Aorta (tissue), 5 donors: ENCODE measurements at regions of chr15 and their contacts with region 1.

Region 1: DNA sequence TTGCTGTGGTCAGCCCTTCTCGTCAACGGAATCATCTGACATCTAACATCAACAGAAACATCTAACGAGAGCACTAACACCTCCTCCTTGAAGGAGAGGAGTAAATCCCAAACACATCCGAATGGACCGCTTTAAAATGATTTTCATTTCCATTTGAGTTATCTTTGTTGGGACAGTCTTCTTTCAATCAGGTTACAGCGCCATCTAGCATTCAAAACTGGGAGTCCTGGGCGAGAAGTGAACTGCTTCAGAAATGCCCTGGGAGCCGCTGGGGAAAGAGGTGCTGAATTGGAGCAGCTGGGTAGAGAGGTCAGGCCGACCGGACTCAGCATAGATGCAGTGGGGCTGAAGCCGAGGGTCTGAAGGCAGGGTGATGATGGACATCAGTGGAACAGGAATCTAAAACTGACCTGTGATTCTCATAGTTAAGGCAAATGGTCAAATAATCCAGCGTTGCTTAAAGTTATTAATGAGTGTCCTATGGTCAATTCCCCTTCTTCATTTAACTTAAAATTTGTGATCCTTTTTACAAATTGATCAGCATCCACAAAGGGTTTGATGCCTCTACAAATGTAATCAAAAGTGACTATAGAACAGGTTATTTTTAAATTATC is 170.0 kb upstream of the NDN start:
- DNase-seq: no peak
- ATAC-seq: no peak
- H3K4me3 ChIP-seq: no peak overlapping the region
- H3K27ac ChIP-seq: no peak overlapping the region
- H3K4me1 ChIP-seq: no peaks in the 10 kb centered on the region
- H3K27me3 ChIP-seq: no peaks in the 10 kb centered on the region

Region 2: GRCh38 chr15:23750776-23751175 is 106.4 kb before region 1 on chr15:
- intact Hi-C with region 1: no loop called
- DNase-seq: no peak
- ATAC-seq: no peak
- H3K4me3 ChIP-seq: no peak overlapping the region
- H3K27ac ChIP-seq: no peak overlapping the region
- H3K4me1 ChIP-seq: no peaks in the 10 kb centered on the region
- H3K27me3 ChIP-seq: no peaks in the 10 kb centered on the region

Region 3: GRCh38 chr15:23823508-23823907 is 33.6 kb before region 1 on chr15:
- intact Hi-C with region 1: no loop called
- DNase-seq: no peak
- ATAC-seq: no peak
- H3K4me3 ChIP-seq: no peak overlapping the region
- H3K27ac ChIP-seq: no peak overlapping the region
- H3K4me1 ChIP-seq: no peaks in the 10 kb centered on the region
- H3K27me3 ChIP-seq: no peaks in the 10 kb centered on the region

Region 4: DNA sequence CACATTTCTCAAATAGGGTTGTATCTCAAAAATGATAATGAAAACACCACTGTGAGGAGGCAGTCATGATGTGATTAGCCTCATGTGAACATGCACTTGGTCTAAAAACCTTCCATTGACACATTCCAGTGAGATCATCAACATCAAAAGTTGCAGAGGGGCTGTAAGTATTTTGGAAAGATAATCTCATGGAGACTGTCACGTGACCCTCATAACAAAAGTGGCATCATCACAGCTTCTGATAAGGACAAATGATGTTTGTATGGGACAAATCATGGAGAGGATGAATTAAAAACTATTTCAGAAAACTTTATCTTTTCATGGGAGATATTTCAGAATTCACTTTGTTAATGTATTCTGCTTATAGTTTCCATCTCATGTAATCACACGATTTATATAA is 33.1 kb after region 1 on chr15:
- intact Hi-C with region 1: loop called in 1 of 2 experiments (anchors 5 kb)
- DNase-seq: no peak
- ATAC-seq: no peak
- H3K4me3 ChIP-seq: no peak overlapping the region
- H3K27ac ChIP-seq: no peak overlapping the region
- H3K4me1 ChIP-seq: no peaks in the 10 kb centered on the region
- H3K27me3 ChIP-seq: no peaks in the 10 kb centered on the region

Region 5: GRCh38 chr15:23983500-23984259 is 126.5 kb after region 1 on chr15:
- intact Hi-C with region 1: no loop called
- DNase-seq: no peak
- ATAC-seq: no peak
- H3K4me3 ChIP-seq: no peak overlapping the region
- H3K27ac ChIP-seq: no peak overlapping the region
- H3K4me1 ChIP-seq: no peaks in the 10 kb centered on the region
- H3K27me3 ChIP-seq: no peaks in the 10 kb centered on the region